Activated naive CD4-positive, alpha-beta T cell treated with anti-CD3 and anti-CD28 coated beads for 36 hours (primary cell): ENCODE measurements at regions of chr1 and their contacts with region 1.

Region 1: GRCh38 chr1:54052934-54053744 is at the starts of genes TCEANC2 and TMEM59:
- DNase-seq: peak; percentile 99
- H3K4me3 Mint-ChIP-seq: no peak within 1 kb of the TSS
- H3K27ac Mint-ChIP-seq: no peak within 1 kb of the TSS
- H3K4me1 Mint-ChIP-seq: peaks cover 37% of the 10 kb centered on the region
- H3K27me3 Mint-ChIP-seq: no peaks in the 10 kb centered on the region
- total RNA-seq, gene TCEANC2: 13.0 TPM
- total RNA-seq, gene TMEM59: 140 to 142 TPM

Region 2: GRCh38 chr1:53837924-53838652 is 215.1 kb before region 1 on chr1 and contains the start of gene NDC1:
- CTCF ChIA-PET with region 1: no interaction called
- intact Hi-C with region 1: loop called (anchors 1 kb)
- DNase-seq: peak; percentile 92
- H3K4me3 Mint-ChIP-seq: peak within 1 kb of the TSS; percentile 100
- H3K27ac Mint-ChIP-seq: peak within 1 kb of the TSS; percentile 96
- H3K4me1 Mint-ChIP-seq: peaks cover 27% of the 10 kb centered on the region
- H3K27me3 Mint-ChIP-seq: no peaks in the 10 kb centered on the region
- total RNA-seq, gene NDC1: 25.9 to 27.9 TPM

Region 3: DNA sequence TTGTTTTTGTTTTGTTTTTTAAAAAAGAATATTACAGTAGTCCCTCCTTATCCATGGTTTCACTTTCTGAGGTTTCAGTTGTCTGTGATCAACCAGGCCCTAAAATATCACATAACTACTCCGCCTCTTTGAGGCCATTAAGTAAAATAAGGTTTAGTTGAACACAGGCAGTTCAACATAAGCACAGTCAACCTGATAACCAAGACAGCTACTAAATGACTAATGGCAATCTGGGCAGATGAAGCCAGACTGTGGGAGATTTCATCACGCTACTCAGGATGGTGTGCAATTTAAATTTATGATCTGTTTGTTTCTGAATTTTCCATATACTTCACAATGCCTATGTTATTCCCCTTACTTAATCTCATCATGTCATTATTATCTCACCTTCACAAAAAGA is 65.3 kb before region 1 on chr1:
- CTCF ChIA-PET with region 1: interaction called, 7 read pairs
- intact Hi-C with region 1: loop called (anchors 2 kb)
- DNase-seq: peak; percentile 38
- H3K4me3 Mint-ChIP-seq: no peak overlapping the region
- H3K27ac Mint-ChIP-seq: no peak overlapping the region
- H3K4me1 Mint-ChIP-seq: peaks cover 24% of the 10 kb centered on the region
- H3K27me3 Mint-ChIP-seq: no peaks in the 10 kb centered on the region

Region 4: GRCh38 chr1:54287176-54287650 is 234.1 kb after region 1 on chr1:
- CTCF ChIA-PET with region 1: no interaction called
- intact Hi-C with region 1: loop called (anchors 1 kb)
- DNase-seq: peak; percentile 92
- H3K4me3 Mint-ChIP-seq: peak overlapping the region; percentile 69
- H3K27ac Mint-ChIP-seq: peak overlapping the region; percentile 86
- H3K4me1 Mint-ChIP-seq: peaks cover 92% of the 10 kb centered on the region
- H3K27me3 Mint-ChIP-seq: no peaks in the 10 kb centered on the region

Region 5: DNA sequence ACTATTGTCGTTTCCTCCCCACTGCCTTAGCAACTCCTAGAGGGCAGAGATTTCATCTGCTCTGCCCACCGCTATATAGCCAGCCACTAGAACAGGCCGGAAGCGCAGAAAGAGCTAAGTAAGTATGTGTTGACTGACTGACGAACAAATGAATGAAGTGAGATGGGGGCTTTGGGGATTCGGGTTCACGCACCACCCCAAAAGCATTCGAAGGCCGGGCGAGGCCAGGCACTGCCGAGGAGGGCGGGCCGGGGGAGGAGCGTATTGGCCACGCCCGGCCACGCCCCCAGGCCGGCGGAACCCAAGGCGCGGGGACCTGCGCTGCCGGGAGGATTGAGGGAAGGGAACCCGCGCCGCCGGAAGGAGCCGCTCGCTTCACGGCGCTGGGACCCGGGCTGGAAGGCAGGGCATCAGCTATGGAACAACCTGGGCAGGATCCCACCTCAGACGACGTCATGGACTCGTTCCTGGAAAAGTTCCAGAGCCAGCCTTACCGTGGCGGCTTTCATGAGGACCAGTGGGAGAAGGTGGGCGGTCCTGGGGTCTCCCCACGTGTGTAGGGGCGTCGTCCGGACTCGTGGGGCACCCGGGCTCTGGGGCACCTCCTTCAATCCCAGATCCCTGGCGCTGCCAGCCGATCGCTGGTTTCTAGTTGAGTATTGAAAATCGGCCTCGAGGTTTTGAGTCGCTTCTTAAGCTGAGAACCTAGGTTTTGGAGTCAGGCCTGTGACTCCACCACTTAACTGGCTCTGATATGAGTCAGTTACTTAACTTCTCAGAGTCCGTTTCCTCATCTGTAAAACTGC is 662.6 kb after region 1 on chr1 and contains the start of gene TTC4:
- CTCF ChIA-PET with region 1: no interaction called
- intact Hi-C with region 1: loop called (anchors 1 kb)
- DNase-seq: peak; percentile 84
- H3K4me3 Mint-ChIP-seq: peak within 1 kb of the TSS; percentile 92
- H3K27ac Mint-ChIP-seq: peak within 1 kb of the TSS; percentile 92
- H3K4me1 Mint-ChIP-seq: peaks cover 31% of the 10 kb centered on the region
- H3K27me3 Mint-ChIP-seq: no peaks in the 10 kb centered on the region
- total RNA-seq, gene TTC4: 26.3 to 30.2 TPM

Region 6: DNA sequence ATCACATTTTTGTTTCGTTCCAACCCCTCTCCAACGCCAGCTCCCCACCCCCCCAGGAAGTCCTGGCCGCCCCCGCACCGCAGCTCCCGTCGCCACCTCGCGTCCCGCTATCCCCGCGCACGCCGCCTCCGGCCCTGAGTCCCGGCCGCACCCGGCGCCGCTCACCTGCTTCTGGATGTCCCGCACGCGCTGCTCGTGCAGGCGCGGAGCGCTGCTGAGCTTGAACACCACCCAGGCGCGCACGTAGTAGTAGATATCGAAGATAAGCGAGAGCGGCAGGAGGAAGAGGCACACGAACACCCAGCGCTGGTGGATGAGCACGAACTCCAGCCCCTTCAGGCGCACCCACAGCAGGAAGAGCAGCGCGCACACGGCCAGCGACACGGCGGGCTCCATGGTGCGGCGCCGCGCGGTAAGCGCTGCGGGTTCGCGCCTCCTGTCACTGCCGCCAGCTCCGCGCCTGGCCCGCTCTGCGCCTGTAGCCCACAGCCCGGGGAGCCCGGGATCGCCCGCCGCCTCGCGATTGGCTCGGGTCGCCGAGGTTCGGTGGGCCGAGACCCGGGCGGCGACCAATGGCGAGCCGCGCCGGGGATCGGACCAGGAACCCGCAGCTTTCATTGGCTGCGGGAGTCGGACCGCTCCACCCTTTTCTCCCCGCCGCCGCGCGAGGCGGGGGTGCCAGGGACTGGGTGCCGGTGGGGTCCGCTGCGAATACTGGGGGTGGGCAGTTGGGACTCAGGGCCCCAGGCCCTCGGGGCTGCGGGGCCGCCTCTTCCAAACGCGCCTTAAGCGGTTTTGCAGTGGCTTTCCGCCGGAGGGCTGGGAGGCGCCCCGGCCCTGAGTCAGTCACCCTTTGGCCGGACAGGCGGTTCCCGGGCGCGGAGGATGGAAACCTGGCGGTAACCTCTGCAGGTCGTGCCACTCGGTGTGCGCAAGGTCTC is 833.9 kb after region 1 on chr1 and contains the start of gene DHCR24:
- CTCF ChIA-PET with region 1: no interaction called
- intact Hi-C with region 1: loop called (anchors 2 kb)
- DNase-seq: peak; percentile 75
- H3K4me3 Mint-ChIP-seq: peak within 1 kb of the TSS; percentile 93
- H3K27ac Mint-ChIP-seq: peak within 1 kb of the TSS; percentile 80
- H3K4me1 Mint-ChIP-seq: peaks cover 31% of the 10 kb centered on the region
- H3K27me3 Mint-ChIP-seq: peaks cover 11% of the 10 kb centered on the region
- total RNA-seq, gene DHCR24: 56.3 to 64.8 TPM